ENCODE measurements at regions of chr18 and their contacts with region 1.

Region 1: DNA sequence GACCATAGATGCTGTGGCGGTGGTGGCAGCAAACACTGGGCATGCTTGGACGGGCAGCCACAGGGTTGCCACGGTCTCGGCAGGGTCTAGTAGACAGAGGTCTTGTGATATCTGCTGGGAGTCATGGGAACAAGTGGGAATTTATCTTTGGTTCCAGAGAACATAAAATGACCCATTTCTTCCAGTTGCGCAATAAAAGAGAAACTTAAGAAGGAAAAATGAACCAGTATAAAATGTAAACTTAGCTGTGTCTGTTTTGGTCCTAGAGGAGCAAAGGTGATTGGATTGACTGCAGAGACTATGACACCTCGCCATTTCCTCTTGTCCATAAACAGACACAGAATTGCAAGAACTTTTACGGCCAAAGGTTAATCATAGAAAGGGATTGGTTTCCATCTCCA is 132.6 kb upstream of the RBBP8 start:
- DNase-seq: no peak
- ATAC-seq: no peak
- H3K4me3 ChIP-seq: no peak overlapping the region
- H3K4me3 Mint-ChIP-seq: no peak overlapping the region
- H3K27ac ChIP-seq: no peak overlapping the region
- H3K27ac Mint-ChIP-seq: no peak overlapping the region
- H3K4me1 ChIP-seq: no peaks in the 10 kb centered on the region
- H3K4me1 Mint-ChIP-seq: no peaks in the 10 kb centered on the region
- H3K27me3 ChIP-seq: peaks cover 2% of the 10 kb centered on the region
- H3K27me3 Mint-ChIP-seq: peaks cover 0 to 5% of the 10 kb centered on the region in 2 donors
- CTCF ChIP-seq: no peak

Region 2: GRCh38 chr18:22494771-22495170 is 305.8 kb before region 1 on chr18:
- intact Hi-C with region 1: no loop called
- DNase-seq: no peak
- ATAC-seq: no peak
- H3K4me3 ChIP-seq: no peak overlapping the region
- H3K4me3 Mint-ChIP-seq: no peak overlapping the region
- H3K27ac ChIP-seq: no peak overlapping the region
- H3K27ac Mint-ChIP-seq: no peak overlapping the region
- H3K4me1 ChIP-seq: no peaks in the 10 kb centered on the region
- H3K4me1 Mint-ChIP-seq: peaks cover 0 to 7% of the 10 kb centered on the region in 2 donors
- H3K27me3 ChIP-seq: peaks cover 8% of the 10 kb centered on the region
- H3K27me3 Mint-ChIP-seq: peaks cover 15 to 36% of the 10 kb centered on the region in 2 donors
- CTCF ChIP-seq: no peak

Region 3: GRCh38 chr18:22983175-22983574 is 182.6 kb after region 1 on chr18:
- intact Hi-C with region 1: loop called (anchors 1 kb)
- DNase-seq: peak in 1 of 2 donors; percentile 48
- ATAC-seq: peak in 1 of 3 donors; percentile 52
- H3K4me3 ChIP-seq: no peak overlapping the region
- H3K4me3 Mint-ChIP-seq: no peak overlapping the region
- H3K27ac ChIP-seq: no peak overlapping the region
- H3K27ac Mint-ChIP-seq: no peak overlapping the region
- H3K4me1 ChIP-seq: no peaks in the 10 kb centered on the region
- H3K4me1 Mint-ChIP-seq: no peaks in the 10 kb centered on the region
- H3K27me3 ChIP-seq: no peaks in the 10 kb centered on the region
- H3K27me3 Mint-ChIP-seq: no peaks in the 10 kb centered on the region
- CTCF ChIP-seq: peak; percentile 59

Region 4: DNA sequence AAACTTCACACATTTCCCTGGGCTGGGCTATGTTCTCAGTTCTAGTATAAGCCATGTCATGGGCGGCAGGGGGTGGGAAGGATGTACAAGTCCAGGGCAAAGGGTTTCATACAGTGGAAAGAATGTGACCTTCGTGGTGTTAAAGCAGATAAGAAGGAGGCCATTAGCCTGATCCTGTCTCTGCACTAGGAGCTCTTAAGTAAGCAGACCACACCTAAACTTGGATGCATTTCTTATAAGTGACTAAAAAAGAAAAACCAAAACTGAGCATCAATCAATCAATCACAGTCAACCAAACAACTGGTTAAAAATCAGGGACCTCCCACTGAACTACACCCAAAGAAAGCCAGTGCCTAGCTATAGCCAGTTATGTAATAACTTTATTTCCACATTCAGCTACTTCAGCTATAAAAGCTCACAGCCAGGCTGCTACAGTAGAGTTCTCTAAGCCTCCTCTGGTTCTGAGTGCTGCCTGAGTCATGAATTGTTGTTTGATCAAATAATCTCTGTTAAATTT is 605.8 kb after region 1 on chr18:
- intact Hi-C with region 1: loop called (anchors 1 kb)
- DNase-seq: no peak
- ATAC-seq: no peak
- H3K4me3 ChIP-seq: no peak overlapping the region
- H3K4me3 Mint-ChIP-seq: no peak overlapping the region
- H3K27ac ChIP-seq: no peak overlapping the region
- H3K27ac Mint-ChIP-seq: no peak overlapping the region
- H3K4me1 ChIP-seq: no peaks in the 10 kb centered on the region
- H3K4me1 Mint-ChIP-seq: peaks cover 6 to 10% of the 10 kb centered on the region in 2 donors
- H3K27me3 ChIP-seq: no peaks in the 10 kb centered on the region
- H3K27me3 Mint-ChIP-seq: no peaks in the 10 kb centered on the region
- CTCF ChIP-seq: no peak